Head of caudate nucleus (tissue), 42 donors: ENCODE measurements at regions of chr11 and their contacts with region 1.

Region 1: GRCh38 chr11:66842896-66843775 is at the start of gene RCE1:
- DNase-seq: peak; percentile 69 to 96 (median 92)

Region 2: DNA sequence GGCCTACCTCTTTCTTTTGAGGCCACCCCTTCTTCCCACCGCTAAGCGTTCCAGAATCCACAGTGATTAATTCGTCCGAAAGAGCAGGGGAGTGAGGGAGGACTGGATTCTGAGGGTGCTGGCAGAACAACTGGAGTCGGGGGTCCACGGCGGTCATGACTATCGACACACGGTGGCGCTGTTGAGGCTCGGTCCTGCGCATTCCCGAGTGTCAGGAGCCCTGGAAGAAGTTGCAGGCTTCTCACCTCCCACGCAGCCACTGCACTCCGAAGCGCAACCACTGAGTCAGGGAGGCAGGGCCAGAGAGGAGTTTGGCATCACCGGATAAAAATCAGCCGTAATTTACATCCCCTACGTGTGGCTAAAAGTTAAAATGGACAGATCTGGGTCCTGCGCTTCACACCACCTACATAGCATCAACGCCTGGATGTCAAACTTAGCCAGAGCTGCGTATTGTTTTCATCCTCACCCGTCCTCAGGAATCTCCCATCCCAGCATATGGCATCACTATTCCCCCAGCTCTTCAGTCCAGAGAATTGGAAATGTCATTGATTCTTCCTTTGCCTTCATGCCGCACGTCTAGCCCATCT is 264.0 kb before region 1 on chr11:
- intact Hi-C with region 1: loop called (anchors 10 kb)
- DNase-seq: peak; percentile 67 to 93 (median 83)

Region 3: GRCh38 chr11:66744485-66745340 is 98.4 kb before region 1 on chr11:
- intact Hi-C with region 1: loop called (anchors 10 kb)
- DNase-seq: peak; percentile 38 to 94 (median 87)